GM13976 (cell line): ENCODE measurements at regions of chr16 and their contacts with region 1.

Region 1: DNA sequence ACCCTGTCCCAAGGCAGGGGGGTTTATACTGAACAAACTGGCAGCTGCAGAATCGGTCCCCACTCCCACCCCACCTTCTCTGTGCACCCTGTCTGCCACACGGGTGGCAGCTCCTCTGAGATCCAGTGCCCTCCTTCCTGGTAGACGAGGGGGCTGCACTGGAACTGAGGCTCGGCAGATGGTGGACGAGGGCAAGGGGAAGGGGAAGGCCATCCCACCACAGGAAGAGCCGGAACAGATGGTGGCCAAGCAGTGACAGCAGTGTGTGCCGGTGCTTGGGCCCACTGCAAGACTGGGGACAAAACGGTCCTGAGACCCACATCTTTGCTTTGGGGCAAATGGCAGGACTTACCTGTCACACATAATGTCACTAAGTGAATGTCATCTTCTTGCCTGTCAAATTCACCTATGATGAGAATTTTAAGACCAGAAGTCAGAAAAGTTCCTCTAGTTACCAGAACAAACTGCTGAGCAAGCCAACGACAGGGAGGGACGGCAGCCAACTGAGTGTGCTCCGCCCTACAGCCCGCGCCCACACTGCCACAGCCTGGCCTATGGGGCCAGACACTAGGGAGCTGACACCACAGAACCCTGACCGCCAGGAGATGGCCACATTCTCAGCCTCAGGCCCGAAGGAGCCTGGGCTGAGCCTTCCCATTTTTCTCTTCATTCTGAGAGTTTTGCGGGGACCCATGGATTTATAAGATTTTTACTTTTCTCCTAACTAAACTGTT is 14.4 kb downstream of the NTAN1 start:
- DNase-seq: no peak
- CTCF ChIP-seq: no peak

Region 2: GRCh38 chr16:13940397-13940933 is 1101.0 kb before region 1 on chr16:
- in situ Hi-C with region 1: no loop called
- DNase-seq: no peak
- CTCF ChIP-seq: no peak

Region 3: GRCh38 chr16:14579266-14579665 is 462.2 kb before region 1 on chr16:
- in situ Hi-C with region 1: no loop called
- DNase-seq: no peak
- CTCF ChIP-seq: no peak

Region 4: DNA sequence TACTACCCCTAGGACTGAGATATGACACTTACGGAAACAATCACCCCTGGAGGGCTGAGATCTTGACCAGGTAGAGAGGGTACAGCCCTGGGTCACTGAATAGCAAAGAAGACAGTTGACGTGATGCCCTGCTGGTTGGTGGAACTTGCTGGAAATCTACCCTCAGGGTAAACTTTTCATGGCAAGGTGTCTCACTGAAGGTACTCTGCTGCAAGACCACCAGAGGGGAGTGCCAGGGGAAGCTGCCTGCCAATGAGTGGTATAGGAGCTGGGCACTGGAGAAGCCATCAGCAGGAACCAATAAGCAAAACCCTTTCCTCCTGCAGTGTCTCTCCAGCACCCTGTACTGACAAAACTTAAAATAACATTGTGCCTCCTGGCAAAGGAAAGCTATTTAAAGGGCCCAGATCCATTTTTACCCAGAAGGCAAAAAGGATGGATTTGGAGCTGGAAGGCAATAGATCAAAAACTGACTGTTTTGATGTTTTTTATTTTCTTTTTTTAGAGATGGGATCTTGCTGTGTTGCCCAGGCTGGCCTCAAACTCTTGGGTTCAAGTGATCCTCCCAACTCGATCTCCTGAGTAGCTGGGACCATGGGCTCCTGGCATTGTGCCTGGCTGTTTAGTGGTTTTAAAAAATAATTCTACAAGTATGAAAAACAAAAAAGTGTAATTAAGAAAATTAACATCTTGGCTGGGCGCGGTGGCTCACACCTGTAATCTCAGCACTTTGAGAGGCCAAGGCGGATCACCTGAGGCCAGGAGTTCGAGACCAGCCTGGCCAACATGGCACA is 77.9 kb before region 1 on chr16:
- in situ Hi-C with region 1: loop called (anchors 10 kb)
- DNase-seq: peak; percentile 11
- CTCF ChIP-seq: no peak